ENCODE measurements at regions of chr9 and their contacts with region 1.

Region 1: DNA sequence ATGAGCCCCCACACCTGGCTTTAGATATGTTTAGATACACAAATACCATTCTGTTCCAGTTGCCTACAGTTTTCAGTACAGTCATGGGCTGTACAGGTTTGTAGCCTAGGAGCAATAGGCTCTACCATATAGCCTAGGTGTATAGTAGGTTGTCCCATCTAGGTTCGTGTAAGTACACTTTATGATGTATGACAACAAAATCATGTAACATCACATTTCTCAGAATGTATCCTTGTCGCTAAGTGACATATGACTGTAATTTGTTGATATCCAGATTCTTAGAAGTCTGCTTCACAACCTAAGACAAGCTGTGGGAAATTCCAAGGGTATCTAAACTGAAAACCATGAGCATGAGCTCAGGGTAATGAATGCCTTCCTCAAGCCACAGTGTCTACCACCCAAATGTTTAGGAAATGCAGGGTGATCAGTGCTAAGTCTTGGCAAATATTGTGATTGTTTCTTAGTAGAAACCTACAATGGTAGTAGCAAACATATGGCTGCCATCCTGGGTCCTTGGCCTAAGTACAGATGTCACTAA is 8.4 kb downstream of the ECM2 start:
- DNase-seq: no peak
- ATAC-seq: no peak
- H3K4me3 ChIP-seq: no peak overlapping the region
- H3K27ac ChIP-seq: no peak overlapping the region
- H3K4me1 ChIP-seq: no peaks in the 10 kb centered on the region
- H3K27me3 ChIP-seq: no peaks in the 10 kb centered on the region
- CTCF ChIP-seq: no peak

Region 2: GRCh38 chr9:92208693-92209524 is 318.5 kb before region 1 on chr9:
- CTCF ChIA-PET with region 1: no interaction called
- POLR2A ChIA-PET with region 1: no interaction called
- in situ Hi-C with region 1: no loop called
- intact Hi-C with region 1: no loop called
- DNase-seq: no peak
- ATAC-seq: no peak
- H3K4me3 ChIP-seq: no peak overlapping the region
- H3K27ac ChIP-seq: no peak overlapping the region
- H3K4me1 ChIP-seq: no peaks in the 10 kb centered on the region
- H3K27me3 ChIP-seq: no peaks in the 10 kb centered on the region
- CTCF ChIP-seq: no peak

Region 3: DNA sequence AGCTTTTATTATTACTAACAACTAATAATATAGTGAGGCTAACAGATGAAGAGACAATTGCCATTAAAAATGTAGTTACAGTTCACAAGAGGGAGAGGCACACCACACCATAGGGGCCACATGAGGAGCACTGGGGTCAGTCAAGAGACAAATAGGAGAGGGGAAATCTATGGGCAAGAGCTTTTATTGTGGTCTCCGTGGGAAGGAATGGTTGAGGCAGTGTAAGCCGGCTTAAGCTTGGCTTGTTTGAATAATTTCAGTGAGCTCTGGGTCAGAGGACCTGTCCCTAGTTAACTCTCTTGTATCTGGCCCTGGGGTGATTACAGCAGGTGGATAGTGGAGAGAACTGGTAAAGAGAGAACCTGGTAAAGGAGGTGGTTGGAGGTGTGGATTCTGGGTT is 158.3 kb before region 1 on chr9:
- CTCF ChIA-PET with region 1: no interaction called
- POLR2A ChIA-PET with region 1: interaction called, 10 read pairs
- in situ Hi-C with region 1: no loop called
- intact Hi-C with region 1: no loop called
- DNase-seq: no peak
- ATAC-seq: no peak
- H3K4me3 ChIP-seq: no peak overlapping the region
- H3K27ac ChIP-seq: no peak overlapping the region
- H3K4me1 ChIP-seq: no peaks in the 10 kb centered on the region
- H3K27me3 ChIP-seq: no peaks in the 10 kb centered on the region
- CTCF ChIP-seq: no peak

Measured in Panc1 (cell line).